Posterior vena cava (tissue), 2 donors: ENCODE measurements at regions of chr5 and their contacts with region 1.

Region 1: DNA sequence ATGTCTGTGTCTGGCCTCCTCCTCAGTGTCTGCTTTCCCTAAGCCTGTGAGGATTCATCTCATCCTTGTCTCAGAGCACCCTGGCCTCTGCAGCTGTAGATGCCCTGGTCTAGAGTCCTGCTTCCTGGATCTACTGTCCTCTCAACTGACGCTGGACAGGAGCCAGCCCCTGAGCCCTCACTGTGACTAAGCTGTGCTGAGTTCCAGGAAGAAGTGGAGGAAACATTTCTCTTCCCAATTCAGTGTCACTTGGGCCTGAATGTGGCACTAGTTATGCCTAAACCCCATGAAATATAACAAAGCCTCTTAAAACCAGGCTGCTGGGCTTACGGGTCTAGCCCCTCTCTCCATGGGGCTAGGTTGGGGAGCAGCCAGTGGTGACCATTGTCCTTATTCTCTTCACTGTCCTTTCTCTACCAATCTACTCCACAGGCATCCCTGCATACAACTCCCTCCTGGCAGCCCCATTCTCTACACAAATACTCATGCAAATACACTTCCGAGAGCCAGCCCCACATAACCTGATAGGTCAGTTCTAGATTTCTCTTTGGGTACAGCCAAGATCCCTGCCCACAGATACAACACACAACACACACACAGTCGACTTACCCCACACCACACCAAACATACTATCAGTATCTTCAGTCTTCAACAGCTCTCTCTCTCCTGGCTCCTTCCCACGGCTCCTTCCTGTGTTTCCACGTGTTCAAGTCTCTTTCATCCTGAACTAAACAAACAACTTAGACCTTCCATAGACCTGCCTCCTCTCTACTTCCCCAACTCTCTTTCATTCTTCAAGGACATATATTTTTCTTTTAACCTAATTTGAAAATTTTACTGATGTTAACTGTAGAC is 220.8 kb downstream of the SNX18 start:
- DNase-seq: peak; percentile 94

Region 2: GRCh38 chr5:54176066-54176830 is 562.1 kb before region 1 on chr5:
- intact Hi-C with region 1: loop called in 1 of 2 experiments (anchors 5 kb)
- DNase-seq: no peak